ENCODE measurements at regions of chr3 and their contacts with region 1.

Region 1: DNA sequence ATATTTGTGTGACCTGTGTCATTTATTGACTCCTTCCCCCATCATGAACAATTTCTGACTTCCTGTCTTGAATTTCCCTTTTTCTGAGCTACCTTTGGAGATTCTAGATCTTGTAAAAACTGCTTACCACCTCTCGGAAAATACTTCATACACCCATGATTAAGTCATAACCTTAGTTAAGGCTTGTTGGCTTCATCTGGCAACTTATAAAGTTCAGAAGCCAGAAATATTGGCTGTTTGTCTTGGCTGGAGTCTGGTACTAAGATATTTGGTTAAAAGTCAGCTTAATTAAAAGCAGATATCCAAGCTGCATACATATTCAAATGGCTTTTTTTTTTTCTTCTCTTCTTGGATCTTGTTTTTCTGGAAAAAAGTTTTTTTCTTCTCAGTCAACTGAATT is 37.3 kb upstream of the B3GALNT1 start:
- DNase-seq: peak; percentile 35
- ATAC-seq: peak; percentile 27
- H3K4me3 ChIP-seq: no peak overlapping the region
- H3K27ac ChIP-seq: peak overlapping the region; percentile 94
- H3K4me1 ChIP-seq: peaks cover 40% of the 10 kb centered on the region
- H3K27me3 ChIP-seq: no peaks in the 10 kb centered on the region
- CTCF ChIP-seq: no peak

Region 2: GRCh38 chr3:161415497-161416251 is 273.2 kb after region 1 on chr3:
- CTCF ChIA-PET with region 1: no interaction called
- POLR2A ChIA-PET with region 1: no interaction called
- intact Hi-C with region 1: loop called (anchors 5 kb)
- DNase-seq: peak; percentile 97
- ATAC-seq: peak; percentile 29
- H3K4me3 ChIP-seq: peak overlapping the region; percentile 27; the same call in 1 of the 2 replicates
- H3K27ac ChIP-seq: peak overlapping the region; percentile 98
- H3K4me1 ChIP-seq: peaks cover 74% of the 10 kb centered on the region
- H3K27me3 ChIP-seq: no peaks in the 10 kb centered on the region
- CTCF ChIP-seq: no peak